Caco-2 (cell line): ENCODE measurements at regions of chr2 and their contacts with region 1.

Region 1: DNA sequence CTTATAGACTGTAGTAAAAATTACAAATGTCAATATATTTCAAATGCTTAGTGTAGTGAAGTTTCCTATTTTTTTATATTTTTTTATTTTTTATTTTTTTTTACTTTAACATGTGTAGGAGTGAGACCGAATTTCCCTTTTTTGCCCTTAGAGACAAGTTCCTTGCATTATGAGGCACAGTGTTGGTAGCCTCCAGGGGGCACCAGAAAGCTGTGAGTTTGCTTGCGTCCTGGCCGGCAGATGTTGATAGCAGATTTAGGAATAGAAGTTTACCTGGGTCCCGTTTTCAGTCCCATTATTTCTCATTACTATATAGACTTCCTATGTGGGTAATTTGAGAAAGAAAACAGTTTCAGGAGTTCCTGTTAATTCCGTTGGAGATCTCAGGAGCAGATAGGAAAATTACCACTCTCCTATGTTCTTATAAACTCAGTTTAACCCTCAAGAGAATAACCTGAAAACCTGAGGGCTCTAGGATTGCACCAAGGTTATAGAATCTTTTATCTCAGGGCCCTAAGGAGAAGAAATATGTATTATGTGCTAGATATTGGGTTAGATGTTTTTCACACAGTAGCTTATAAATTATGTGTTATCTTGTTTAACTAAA is 157.5 kb upstream of the SESTD1 start:
- DNase-seq: peak; percentile 72 to 80
- H3K4me3 ChIP-seq: no peak overlapping the region
- H3K4me3 Mint-ChIP-seq: no peak overlapping the region
- H3K27ac Mint-ChIP-seq: no peak overlapping the region
- H3K4me1 ChIP-seq: 0 out of 2 replicates have a peak, but pooled peaks cover 3% of the 10 kb centered on the region
- H3K4me1 Mint-ChIP-seq: no peaks in the 10 kb centered on the region
- H3K27me3 ChIP-seq: no peaks in the 10 kb centered on the region
- H3K27me3 Mint-ChIP-seq: no peaks in the 10 kb centered on the region
- CTCF ChIP-seq: peak; percentile 60 to 93

Region 2: DNA sequence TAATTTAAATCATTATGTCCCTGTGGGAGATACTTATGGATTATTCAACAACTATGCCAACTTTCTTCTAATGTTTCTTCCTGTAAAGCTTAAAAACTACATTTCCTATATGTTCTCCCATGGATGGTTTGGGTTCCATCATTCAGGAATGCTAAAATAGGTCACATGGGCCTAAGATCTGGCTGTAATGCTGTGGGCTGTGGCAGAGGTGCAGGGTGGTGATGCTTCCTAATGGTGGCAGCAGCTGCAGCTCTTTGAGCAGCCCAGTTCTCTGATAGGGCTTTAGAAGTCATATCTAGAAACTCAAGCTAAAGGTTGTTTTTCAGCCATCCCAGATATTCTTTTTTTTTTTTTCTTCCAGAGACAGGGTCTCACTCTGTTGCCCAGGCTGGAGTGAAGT is 173.1 kb after region 1 on chr2:
- CTCF ChIA-PET with region 1: no interaction called
- POLR2A ChIA-PET with region 1: no interaction called
- intact Hi-C with region 1: loop called (anchors 5 kb)
- DNase-seq: peak; percentile 28 to 44
- H3K4me3 ChIP-seq: no peak overlapping the region
- H3K4me3 Mint-ChIP-seq: no peak overlapping the region
- H3K27ac Mint-ChIP-seq: no peak overlapping the region
- H3K4me1 ChIP-seq: no peaks in the 10 kb centered on the region
- H3K4me1 Mint-ChIP-seq: no peaks in the 10 kb centered on the region
- H3K27me3 ChIP-seq: no peaks in the 10 kb centered on the region
- H3K27me3 Mint-ChIP-seq: no peaks in the 10 kb centered on the region
- CTCF ChIP-seq: peak in 1 of 2 experiments; percentile 10